ENCODE measurements at regions of chr14 and their contacts with region 1.

Region 1: DNA sequence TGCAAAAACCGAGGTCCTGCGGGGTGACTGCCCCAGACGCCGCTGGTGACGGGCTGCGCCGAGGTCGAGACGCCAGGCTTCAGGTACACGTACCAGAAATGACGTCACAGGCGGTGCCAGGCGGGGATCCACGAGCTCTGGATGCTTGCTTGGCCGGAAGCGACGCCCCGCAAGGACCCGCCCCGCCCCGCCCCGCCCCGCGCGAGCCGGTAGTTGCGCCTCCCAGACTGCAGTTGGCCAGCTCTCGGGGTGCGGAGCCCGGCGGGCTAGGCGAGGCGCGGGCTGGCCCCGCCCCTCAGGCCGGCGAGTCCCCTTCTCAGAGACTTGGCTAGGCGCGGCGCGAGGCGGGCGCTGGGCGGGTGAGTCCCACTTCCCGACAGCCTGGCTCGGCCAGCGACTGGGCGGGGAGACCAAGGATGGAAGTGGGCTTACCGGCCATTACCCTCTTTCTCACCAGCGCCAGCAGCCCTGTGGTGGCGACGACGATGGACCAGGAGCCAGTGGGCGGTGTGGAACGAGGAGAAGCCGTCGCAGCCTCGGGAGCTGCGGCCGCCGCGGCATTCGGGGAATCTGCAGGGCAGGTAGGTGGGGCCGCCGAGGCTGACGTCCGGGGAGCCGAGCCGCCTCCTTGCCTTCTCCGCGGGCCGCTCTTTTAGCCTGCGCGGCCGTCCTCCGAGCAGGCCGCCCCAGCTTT is at the start of gene FAM177A1:
- DNase-seq: peak; percentile 100
- ATAC-seq: peak; percentile 94
- H3K4me3 Mint-ChIP-seq: peak within 1 kb of the TSS; percentile 95
- H3K27ac Mint-ChIP-seq: peak within 1 kb of the TSS; percentile 99
- H3K4me1 Mint-ChIP-seq: peaks cover 23% of the 10 kb centered on the region
- H3K27me3 Mint-ChIP-seq: no peaks in the 10 kb centered on the region
- total RNA-seq, gene FAM177A1: 35.4 to 37.2 TPM

Region 2: GRCh38 chr14:34629657-34630529 is 416.3 kb before region 1 on chr14 and contains the start of gene SNX6:
- CTCF ChIA-PET with region 1: no interaction called
- POLR2A ChIA-PET with region 1: no interaction called
- intact Hi-C with region 1: loop called in 1 of 2 experiments (anchors 1 kb)
- DNase-seq: peak; percentile 93
- ATAC-seq: peak; percentile 98
- H3K4me3 Mint-ChIP-seq: peak within 1 kb of the TSS; percentile 97
- H3K27ac Mint-ChIP-seq: peak within 1 kb of the TSS; percentile 98
- H3K4me1 Mint-ChIP-seq: peaks cover 25% of the 10 kb centered on the region
- H3K27me3 Mint-ChIP-seq: no peaks in the 10 kb centered on the region
- total RNA-seq, gene SNX6: 77.3 to 78.7 TPM

Region 3: GRCh38 chr14:35034440-35034833 is 11.8 kb before region 1 on chr14:
- CTCF ChIA-PET with region 1: interaction called, 4 read pairs
- POLR2A ChIA-PET with region 1: interaction called, 3 read pairs
- intact Hi-C with region 1: loop called in 1 of 2 experiments (anchors 1 kb)
- DNase-seq: no peak
- ATAC-seq: no peak
- H3K4me3 Mint-ChIP-seq: no peak overlapping the region
- H3K27ac Mint-ChIP-seq: no peak overlapping the region
- H3K4me1 Mint-ChIP-seq: no peaks in the 10 kb centered on the region
- H3K27me3 Mint-ChIP-seq: no peaks in the 10 kb centered on the region

Region 4: DNA sequence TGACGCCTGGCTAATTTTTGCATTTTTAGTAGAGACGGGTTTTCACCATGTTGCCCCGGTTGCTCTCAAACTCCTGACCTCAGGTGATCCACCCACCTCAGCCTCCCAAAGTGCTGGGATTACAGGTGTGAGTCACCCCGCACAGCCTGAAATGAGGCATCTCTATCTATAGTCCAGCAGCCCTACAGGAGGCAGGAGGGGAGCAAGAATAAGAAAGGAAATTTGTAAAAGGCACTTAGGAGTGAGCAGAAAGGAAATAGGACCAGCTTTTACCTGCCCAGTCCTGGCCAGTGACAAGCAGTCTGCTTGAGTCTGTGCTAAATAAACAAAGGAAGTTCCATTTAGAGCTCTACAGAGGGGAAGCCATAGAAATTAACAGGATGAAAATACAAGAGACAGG is 231.0 kb after region 1 on chr14:
- CTCF ChIA-PET with region 1: no interaction called
- POLR2A ChIA-PET with region 1: no interaction called
- intact Hi-C with region 1: no loop called
- DNase-seq: no peak
- ATAC-seq: no peak
- H3K4me3 Mint-ChIP-seq: no peak overlapping the region
- H3K27ac Mint-ChIP-seq: no peak overlapping the region
- H3K4me1 Mint-ChIP-seq: peaks cover 7% of the 10 kb centered on the region
- H3K27me3 Mint-ChIP-seq: no peaks in the 10 kb centered on the region

Measured in activated CD4-positive, alpha-beta T cell treated with anti-CD3 and anti-CD28 coated beads for 36 hours (primary cell).